ENCODE measurements at regions of chr9 and their contacts with region 1.

Region 1: GRCh38 chr9:112074250-112075008 is 100.7 kb downstream of the SUSD1 start:
- DNase-seq: peak; percentile 45
- CTCF ChIP-seq: peak; percentile 87

Region 2: GRCh38 chr9:110977259-110977709 is 1097.1 kb before region 1 on chr9:
- CTCF ChIA-PET with region 1: no interaction called
- POLR2A ChIA-PET with region 1: no interaction called
- DNase-seq: no peak
- CTCF ChIP-seq: no peak

Region 3: GRCh38 chr9:111916234-111916645 is 158.2 kb before region 1 on chr9:
- CTCF ChIA-PET with region 1: interaction called, 12 read pairs
- POLR2A ChIA-PET with region 1: no interaction called
- DNase-seq: peak; percentile 53
- CTCF ChIP-seq: no peak

Region 4: DNA sequence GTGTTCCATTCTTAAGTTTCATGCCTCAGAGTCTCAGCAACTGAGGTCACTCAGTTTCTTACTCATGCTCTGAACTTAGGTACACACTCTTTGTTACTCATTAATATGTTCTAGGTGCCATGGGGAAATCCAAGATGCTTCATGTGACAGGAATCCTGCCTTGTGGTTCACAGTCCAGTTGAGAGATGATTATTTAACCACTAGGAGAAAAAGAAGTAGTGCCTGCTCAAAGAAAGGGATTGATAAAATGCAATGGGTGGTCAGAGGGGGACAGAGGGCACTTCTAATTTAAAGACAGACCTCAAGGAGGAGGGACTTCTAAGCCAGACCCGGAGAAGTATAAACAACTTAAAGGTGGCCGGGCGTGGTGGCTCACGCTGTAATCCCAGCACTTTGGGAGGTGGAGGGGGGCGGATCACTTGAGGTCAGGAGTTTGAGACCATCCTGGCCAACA is 108.8 kb before region 1 on chr9:
- CTCF ChIA-PET with region 1: interaction called, 11 read pairs
- POLR2A ChIA-PET with region 1: no interaction called
- DNase-seq: peak; percentile 71
- CTCF ChIP-seq: no peak

Region 5: GRCh38 chr9:112050544-112051475 is 23.6 kb before region 1 on chr9:
- CTCF ChIA-PET with region 1: interaction called, 13 read pairs
- POLR2A ChIA-PET with region 1: no interaction called
- DNase-seq: no peak
- CTCF ChIP-seq: no peak